Mammary epithelial cell (primary cell): ENCODE measurements at regions of chr16 and their contacts with region 1.

Region 1: DNA sequence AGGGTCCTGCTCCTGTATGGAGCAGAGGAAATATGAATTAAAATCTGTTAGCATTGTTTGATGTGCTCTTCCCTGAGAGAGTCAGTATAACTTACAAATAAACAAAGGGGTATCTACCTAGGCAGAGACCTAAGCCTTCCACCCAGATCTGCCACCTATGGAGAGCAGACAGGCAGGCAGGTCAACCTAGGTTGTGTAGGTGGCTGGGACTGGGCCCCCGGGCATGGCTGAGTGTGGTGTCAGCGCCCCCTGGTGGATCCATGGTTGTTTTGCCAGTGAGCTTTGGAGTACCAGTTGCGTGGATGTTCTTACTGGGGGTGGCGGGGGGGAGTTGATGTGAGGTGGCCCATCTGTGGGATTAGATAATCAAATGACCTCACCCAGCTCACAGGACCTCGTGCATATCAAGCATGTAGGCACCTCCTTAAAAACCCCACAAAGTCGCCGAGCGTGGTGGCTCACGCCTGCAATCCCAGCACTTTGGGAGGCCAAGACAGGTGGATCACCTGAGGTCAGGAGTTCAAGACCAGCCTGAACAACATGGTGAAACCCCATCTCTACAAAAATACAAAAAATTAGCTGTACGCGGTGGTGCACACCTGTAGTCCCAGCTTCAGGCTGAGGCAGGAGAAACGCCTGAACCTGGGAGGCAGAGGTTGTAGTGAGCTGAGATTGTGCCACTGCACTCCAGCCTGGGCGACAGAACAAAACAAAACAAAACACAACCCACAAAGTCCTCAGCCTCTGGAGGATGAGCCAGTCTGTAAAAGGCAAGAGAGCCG is 17.6 kb downstream of the DUS2 start:
- DNase-seq: peak; percentile 54
- H3K4me3 ChIP-seq: no peak overlapping the region
- H3K27ac ChIP-seq: no peak overlapping the region
- H3K4me1 ChIP-seq: no peaks in the 10 kb centered on the region
- H3K27me3 ChIP-seq: no peaks in the 10 kb centered on the region
- CTCF ChIP-seq: peak; percentile 80 to 91

Region 2: GRCh38 chr16:67816240-67817031 is 224.3 kb before region 1 on chr16:
- CTCF ChIA-PET with region 1: interaction called, 11 read pairs
- dilution Hi-C with region 1: no loop called
- in situ Hi-C with region 1: no loop called
- intact Hi-C with region 1: no loop called
- DNase-seq: peak; percentile 57
- H3K4me3 ChIP-seq: no peak overlapping the region
- H3K27ac ChIP-seq: no peak overlapping the region
- H3K4me1 ChIP-seq: no peaks in the 10 kb centered on the region
- H3K27me3 ChIP-seq: no peaks in the 10 kb centered on the region
- CTCF ChIP-seq: peak; percentile 99 to 100

Region 3: DNA sequence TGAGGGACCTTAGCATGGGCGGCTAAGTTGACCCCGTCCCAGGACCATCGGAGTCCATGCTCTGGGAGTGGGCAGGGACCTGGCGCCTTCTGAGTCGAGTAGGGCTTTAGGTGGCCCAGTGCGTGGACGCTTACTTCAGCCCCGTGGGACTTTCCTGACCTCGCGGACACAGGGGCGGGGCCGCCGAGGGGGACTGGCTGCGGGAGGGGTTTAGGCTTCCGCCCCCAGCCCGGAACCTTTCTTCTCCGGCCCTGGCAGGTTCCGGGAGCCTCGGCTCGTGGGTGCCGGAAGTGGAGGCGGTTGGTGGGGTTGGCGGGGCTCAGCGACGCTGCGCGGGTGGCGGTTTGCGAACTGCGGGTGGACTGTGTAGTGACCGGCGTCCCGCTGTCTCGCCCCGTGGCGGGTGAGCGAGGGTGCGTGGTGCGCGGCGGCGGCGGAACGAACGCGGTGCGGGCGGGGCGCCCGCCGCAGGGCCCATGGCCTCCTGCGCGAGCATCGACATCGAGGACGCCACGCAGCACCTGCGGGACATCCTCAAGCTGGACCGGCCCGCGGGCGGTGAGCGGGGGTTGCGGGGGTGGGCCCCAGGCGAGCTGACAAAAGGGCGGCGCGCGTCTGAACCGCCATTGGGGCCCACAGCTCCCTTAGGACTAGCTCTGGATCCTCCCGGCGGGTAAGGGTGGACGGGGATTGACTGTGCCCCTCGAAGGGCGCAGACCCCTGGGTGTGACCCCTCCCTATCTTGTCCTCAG is 167.7 kb before region 1 on chr16 and contains the start of gene EDC4:
- CTCF ChIA-PET with region 1: no interaction called
- dilution Hi-C with region 1: no loop called
- in situ Hi-C with region 1: no loop called
- intact Hi-C with region 1: loop called (anchors 2 kb)
- DNase-seq: peak; percentile 74
- H3K4me3 ChIP-seq: peak within 1 kb of the TSS; percentile 55 to 86 (median 67)
- H3K27ac ChIP-seq: peak within 1 kb of the TSS; percentile 51
- H3K4me1 ChIP-seq: peaks cover 21% of the 10 kb centered on the region
- H3K27me3 ChIP-seq: no peaks in the 10 kb centered on the region
- CTCF ChIP-seq: no peak
- total RNA-seq, gene EDC4: 31.5 to 53.9 TPM

Region 4: GRCh38 chr16:67935402-67936123 is 105.1 kb before region 1 on chr16:
- CTCF ChIA-PET with region 1: interaction called, 18 read pairs
- dilution Hi-C with region 1: no loop called
- in situ Hi-C with region 1: no loop called
- intact Hi-C with region 1: loop called (anchors 2 kb)
- DNase-seq: peak; percentile 98
- H3K4me3 ChIP-seq: peak overlapping the region; percentile 61 to 88 (median 84)
- H3K27ac ChIP-seq: peak overlapping the region; percentile 57
- H3K4me1 ChIP-seq: peaks cover 18% of the 10 kb centered on the region
- H3K27me3 ChIP-seq: no peaks in the 10 kb centered on the region
- CTCF ChIP-seq: no peak

Region 5: GRCh38 chr16:67979955-67980678 is 60.6 kb before region 1 on chr16 and contains the start of gene DPEP3:
- CTCF ChIA-PET with region 1: interaction called, 11 read pairs
- dilution Hi-C with region 1: no loop called
- in situ Hi-C with region 1: no loop called
- intact Hi-C with region 1: no loop called
- DNase-seq: no peak
- H3K4me3 ChIP-seq: no peak within 1 kb of the TSS
- H3K27ac ChIP-seq: no peak within 1 kb of the TSS
- H3K4me1 ChIP-seq: peaks cover 9% of the 10 kb centered on the region
- H3K27me3 ChIP-seq: no peaks in the 10 kb centered on the region
- CTCF ChIP-seq: peak; percentile 10
- total RNA-seq, gene DPEP3: not detected

Region 6: GRCh38 chr16:68005786-68006286 is 34.9 kb before region 1 on chr16:
- CTCF ChIA-PET with region 1: no interaction called
- dilution Hi-C with region 1: no loop called
- in situ Hi-C with region 1: no loop called
- intact Hi-C with region 1: no loop called
- DNase-seq: peak; percentile 69
- H3K4me3 ChIP-seq: no peak overlapping the region
- H3K27ac ChIP-seq: no peak overlapping the region
- H3K4me1 ChIP-seq: peaks cover 7% of the 10 kb centered on the region
- H3K27me3 ChIP-seq: no peaks in the 10 kb centered on the region
- CTCF ChIP-seq: no peak